Gastrocnemius medialis (tissue), 4 donors: ENCODE measurements at regions of chr13 and their contacts with region 1.

Region 1: DNA sequence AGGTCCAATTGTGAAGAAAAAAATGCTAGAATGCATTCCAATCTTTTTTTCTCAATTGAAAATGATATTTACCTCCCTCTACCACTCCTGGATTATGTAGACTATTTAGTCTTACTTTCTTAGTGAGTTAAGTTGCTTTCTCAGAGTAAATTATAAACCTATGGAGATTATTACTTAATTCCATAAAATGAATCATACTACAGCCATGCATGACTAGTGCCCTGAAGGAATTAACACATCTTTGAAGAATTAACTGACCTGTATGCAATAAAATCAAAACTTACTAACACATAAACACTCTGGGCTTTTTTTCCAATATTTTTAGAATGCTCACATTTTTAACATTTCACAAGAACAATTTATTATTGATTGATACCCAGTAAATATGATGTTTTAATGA is 379.4 kb upstream of the DACH1 start:
- DNase-seq: no peak
- ATAC-seq: no peak
- H3K4me3 ChIP-seq: no peak overlapping the region
- H3K27ac ChIP-seq: no peak overlapping the region
- H3K4me1 ChIP-seq: no peaks in the 10 kb centered on the region
- H3K27me3 ChIP-seq: no peaks in the 10 kb centered on the region
- CTCF ChIP-seq: no peak
- POLR2A ChIP-seq: no peak

Region 2: DNA sequence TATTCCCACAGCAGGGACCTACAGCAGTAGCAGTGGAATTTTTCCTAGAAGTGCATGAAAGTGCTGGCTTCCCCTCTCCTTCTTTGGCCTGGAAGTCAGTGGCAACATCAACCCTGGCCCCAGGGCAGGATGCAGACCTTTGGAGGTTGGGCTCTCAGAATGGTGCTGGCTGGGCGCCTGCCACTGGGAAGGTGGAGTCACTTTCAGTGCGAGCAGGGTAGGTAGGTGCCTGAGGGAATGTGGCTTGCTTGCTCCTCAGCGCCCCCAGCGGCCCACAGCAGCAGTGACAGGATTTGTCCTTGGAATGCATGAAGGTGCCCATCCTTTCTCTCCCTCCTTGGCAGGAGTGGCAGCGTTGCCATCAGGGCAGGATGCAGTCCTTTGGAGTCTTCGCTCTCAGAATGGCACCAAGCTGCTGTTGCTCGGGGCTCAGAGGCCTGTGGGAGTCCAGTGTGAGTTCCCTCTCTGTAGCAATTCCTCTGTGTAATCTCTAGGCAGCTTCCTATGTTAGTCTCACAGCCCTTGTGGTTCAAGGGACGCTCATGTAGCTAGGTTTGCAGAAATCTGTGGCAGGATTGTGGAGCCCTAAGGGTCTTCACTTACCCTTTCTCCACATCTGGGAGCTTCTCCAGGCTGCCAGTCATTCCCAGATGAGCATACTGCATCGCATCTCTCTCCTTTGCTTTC is 25.0 kb before region 1 on chr13:
- in situ Hi-C with region 1: no loop called
- intact Hi-C with region 1: no loop called
- DNase-seq: no peak
- ATAC-seq: no peak
- H3K4me3 ChIP-seq: no peak overlapping the region
- H3K27ac ChIP-seq: no peak overlapping the region
- H3K4me1 ChIP-seq: no peaks in the 10 kb centered on the region
- H3K27me3 ChIP-seq: no peaks in the 10 kb centered on the region
- CTCF ChIP-seq: no peak
- POLR2A ChIP-seq: no peak

Region 3: DNA sequence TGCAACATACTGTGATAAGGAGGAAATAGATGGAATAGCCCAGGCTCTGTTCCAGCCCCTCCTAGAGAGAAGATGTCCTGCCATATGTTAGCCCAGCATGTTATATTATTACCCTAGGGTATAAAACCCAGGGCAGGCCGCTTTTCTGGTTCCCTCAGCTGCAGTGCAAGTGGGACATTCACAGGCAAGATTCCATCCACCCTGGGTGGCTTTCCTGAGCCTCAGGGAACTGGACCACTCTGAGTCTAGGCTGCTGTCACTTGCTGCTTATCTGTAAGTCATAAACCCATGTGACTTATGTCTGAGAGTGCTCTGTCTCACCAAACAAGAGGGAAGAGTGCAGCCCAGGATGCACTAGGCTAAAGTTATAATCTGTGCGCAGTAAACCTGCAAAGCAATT is 67.8 kb after region 1 on chr13:
- in situ Hi-C with region 1: no loop called
- intact Hi-C with region 1: no loop called
- DNase-seq: no peak
- ATAC-seq: no peak
- H3K4me3 ChIP-seq: no peak overlapping the region
- H3K27ac ChIP-seq: no peak overlapping the region
- H3K4me1 ChIP-seq: no peaks in the 10 kb centered on the region
- H3K27me3 ChIP-seq: no peaks in the 10 kb centered on the region
- CTCF ChIP-seq: no peak
- POLR2A ChIP-seq: no peak

Region 4: GRCh38 chr13:72341904-72342303 is 95.5 kb after region 1 on chr13:
- in situ Hi-C with region 1: loop called in 1 of 4 experiments (anchors 25 kb)
- intact Hi-C with region 1: no loop called
- DNase-seq: no peak
- ATAC-seq: no peak
- H3K4me3 ChIP-seq: no peak overlapping the region
- H3K27ac ChIP-seq: no peak overlapping the region
- H3K4me1 ChIP-seq: no peaks in the 10 kb centered on the region
- H3K27me3 ChIP-seq: no peaks in the 10 kb centered on the region
- CTCF ChIP-seq: no peak
- POLR2A ChIP-seq: no peak

Region 5: GRCh38 chr13:72384879-72385278 is 138.5 kb after region 1 on chr13:
- in situ Hi-C with region 1: no loop called
- intact Hi-C with region 1: no loop called
- DNase-seq: no peak
- ATAC-seq: no peak
- H3K4me3 ChIP-seq: no peak overlapping the region
- H3K27ac ChIP-seq: no peak overlapping the region
- H3K4me1 ChIP-seq: no peaks in the 10 kb centered on the region
- H3K27me3 ChIP-seq: no peaks in the 10 kb centered on the region
- CTCF ChIP-seq: no peak
- POLR2A ChIP-seq: no peak